SK-N-SH (cell line): ENCODE measurements at regions of chr5 and their contacts with region 1.

Region 1: DNA sequence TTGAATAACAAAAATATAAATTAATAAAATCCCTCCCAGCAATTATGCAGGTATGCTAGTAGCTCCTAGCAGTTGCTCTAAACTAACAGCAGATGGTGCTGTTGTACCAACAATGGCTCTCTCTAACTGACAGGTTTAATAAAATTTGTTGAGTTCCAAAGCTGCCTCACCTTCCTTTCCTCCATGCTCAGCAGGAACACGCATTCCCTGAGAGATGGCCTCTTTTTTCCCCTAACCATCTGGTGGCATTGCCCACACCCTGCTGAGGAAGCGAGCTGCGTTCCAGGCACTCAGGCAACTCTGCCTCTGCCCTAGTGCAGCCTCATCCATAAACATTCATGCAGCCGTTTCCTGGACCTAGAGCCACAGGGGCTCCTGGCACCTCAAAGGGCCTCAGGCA is 106.2 kb downstream of the KLHL3 start:
- DNase-seq: peak; percentile 75
- H3K4me3 ChIP-seq: peak overlapping the region in 1 of 2 experiments; percentile 45; a peak in 1 of 4 replicates
- H3K27ac ChIP-seq: no peak overlapping the region
- H3K4me1 ChIP-seq: peaks cover 0 to 3% of the 10 kb centered on the region in 2 experiments; a peak in 1 of 4 replicates
- H3K27me3 ChIP-seq: no peaks in the 10 kb centered on the region
- CTCF ChIP-seq: peak; percentile 93
- EP300 ChIP-seq: no peak
- RAD21 ChIP-seq: peak; percentile 96

Region 2: DNA sequence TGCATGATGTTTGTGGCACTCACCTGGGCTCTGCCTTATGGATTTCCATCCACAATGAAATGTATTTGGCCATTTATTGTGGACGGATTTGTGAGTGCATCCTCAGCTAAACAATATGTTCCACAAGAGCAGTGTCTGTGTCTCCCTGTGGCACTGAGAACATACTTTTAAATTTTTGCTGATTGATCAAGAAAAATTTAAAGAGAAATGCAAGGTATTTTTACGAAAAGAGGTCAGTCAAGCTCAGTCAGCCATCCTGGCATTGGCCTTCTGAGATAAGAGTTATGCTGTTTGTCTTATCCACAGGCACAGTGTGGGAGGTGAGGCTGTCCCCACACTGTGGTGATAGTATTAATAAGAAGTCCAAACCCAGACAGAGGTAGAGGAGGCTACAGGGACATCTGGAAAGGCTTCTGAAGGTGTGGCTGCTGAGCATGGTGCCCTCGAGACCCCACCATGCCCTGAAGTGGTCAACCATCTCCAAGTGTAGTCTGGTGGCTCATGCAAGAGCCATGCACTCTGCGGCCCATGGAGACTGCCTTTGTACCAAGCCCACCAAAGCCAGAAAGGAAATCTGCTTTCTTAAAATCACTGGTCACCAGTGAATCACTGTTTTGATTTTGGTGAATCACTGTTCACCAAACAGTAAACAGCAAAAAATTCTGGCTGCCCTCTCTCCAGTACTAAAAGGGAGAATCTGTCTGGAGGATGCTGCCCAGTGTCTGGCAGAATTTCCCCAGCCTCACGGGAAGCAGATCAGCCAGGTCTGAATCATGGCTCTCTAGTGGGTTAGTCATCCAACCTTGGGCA is 159.3 kb before region 1 on chr5:
- CTCF ChIA-PET with region 1: no interaction called
- POLR2A ChIA-PET with region 1: no interaction called
- DNase-seq: no peak
- H3K4me3 ChIP-seq: no peak overlapping the region
- H3K27ac ChIP-seq: peak overlapping the region in 1 of 2 experiments; percentile 97; a peak in 3 of 4 replicates
- H3K4me1 ChIP-seq: peaks cover 5 to 28% of the 10 kb centered on the region in 2 experiments
- H3K27me3 ChIP-seq: no peaks in the 10 kb centered on the region
- CTCF ChIP-seq: no peak
- EP300 ChIP-seq: peak in 1 of 2 experiments; percentile 87; a peak in 2 of 4 replicates
- RAD21 ChIP-seq: no peak

Region 3: GRCh38 chr5:137605411-137605810 is 24.2 kb before region 1 on chr5:
- CTCF ChIA-PET with region 1: interaction called, 15 read pairs
- POLR2A ChIA-PET with region 1: no interaction called
- DNase-seq: no peak
- H3K4me3 ChIP-seq: no peak overlapping the region
- H3K27ac ChIP-seq: no peak overlapping the region
- H3K4me1 ChIP-seq: peaks cover 0 to 32% of the 10 kb centered on the region in 2 experiments; a peak in 2 of 4 replicates
- H3K27me3 ChIP-seq: peaks cover 40% of the 10 kb centered on the region
- CTCF ChIP-seq: peak; percentile 27; the same call in 1 of the 2 replicates
- EP300 ChIP-seq: no peak
- RAD21 ChIP-seq: peak; percentile 56

Region 4: DNA sequence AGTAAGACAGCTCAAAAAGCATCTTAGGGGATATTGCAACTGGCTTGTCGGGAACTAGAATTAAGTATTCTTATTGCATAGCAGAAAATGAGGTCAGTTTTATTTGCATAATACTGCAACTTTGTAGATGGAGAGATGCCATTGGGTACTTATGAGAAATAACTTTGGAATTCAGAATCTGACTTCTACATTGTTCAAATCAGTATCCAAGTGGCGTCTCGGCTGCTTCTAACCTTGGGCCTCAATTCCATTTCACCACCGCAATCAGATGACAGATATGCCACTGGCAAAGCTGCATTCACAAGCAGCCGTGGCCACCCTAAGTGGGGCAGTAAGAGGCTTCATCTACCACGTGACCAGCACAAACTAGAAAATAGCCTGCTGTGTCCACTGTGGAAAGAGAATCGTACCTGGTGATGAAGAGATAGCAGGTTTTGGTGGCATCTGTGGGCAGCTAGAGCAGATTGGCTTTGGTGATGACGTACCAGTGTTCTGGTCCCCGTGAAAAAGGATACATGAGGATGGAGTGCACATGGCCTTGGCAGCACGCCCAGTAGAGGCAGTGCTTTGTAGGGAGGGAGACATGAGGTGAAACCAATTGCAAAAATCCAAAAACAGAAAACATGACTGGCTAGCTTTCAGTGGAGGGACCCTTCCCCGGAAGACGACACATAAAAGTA is 10.3 kb before region 1 on chr5:
- CTCF ChIA-PET with region 1: interaction called, 61 read pairs
- POLR2A ChIA-PET with region 1: no interaction called
- DNase-seq: peak; percentile 86
- H3K4me3 ChIP-seq: peak overlapping the region in 1 of 2 experiments; percentile 23; a peak in 1 of 4 replicates
- H3K27ac ChIP-seq: peak overlapping the region; percentile 69 to 83
- H3K4me1 ChIP-seq: peaks cover 16 to 27% of the 10 kb centered on the region in 2 experiments; a peak in 3 of 4 replicates
- H3K27me3 ChIP-seq: no peaks in the 10 kb centered on the region
- CTCF ChIP-seq: no peak
- EP300 ChIP-seq: peak in 1 of 2 experiments; percentile 81; a peak in 2 of 4 replicates
- RAD21 ChIP-seq: no peak; the same call in 1 of the 2 replicates

Region 5: GRCh38 chr5:137649228-137649935 is 19.7 kb after region 1 on chr5:
- CTCF ChIA-PET with region 1: interaction called, 143 read pairs
- POLR2A ChIA-PET with region 1: no interaction called
- DNase-seq: no peak
- H3K4me3 ChIP-seq: no peak overlapping the region
- H3K27ac ChIP-seq: no peak overlapping the region
- H3K4me1 ChIP-seq: peaks cover 0 to 8% of the 10 kb centered on the region in 2 experiments; a peak in 1 of 4 replicates
- H3K27me3 ChIP-seq: no peaks in the 10 kb centered on the region
- CTCF ChIP-seq: no peak
- EP300 ChIP-seq: no peak
- RAD21 ChIP-seq: no peak

Region 6: DNA sequence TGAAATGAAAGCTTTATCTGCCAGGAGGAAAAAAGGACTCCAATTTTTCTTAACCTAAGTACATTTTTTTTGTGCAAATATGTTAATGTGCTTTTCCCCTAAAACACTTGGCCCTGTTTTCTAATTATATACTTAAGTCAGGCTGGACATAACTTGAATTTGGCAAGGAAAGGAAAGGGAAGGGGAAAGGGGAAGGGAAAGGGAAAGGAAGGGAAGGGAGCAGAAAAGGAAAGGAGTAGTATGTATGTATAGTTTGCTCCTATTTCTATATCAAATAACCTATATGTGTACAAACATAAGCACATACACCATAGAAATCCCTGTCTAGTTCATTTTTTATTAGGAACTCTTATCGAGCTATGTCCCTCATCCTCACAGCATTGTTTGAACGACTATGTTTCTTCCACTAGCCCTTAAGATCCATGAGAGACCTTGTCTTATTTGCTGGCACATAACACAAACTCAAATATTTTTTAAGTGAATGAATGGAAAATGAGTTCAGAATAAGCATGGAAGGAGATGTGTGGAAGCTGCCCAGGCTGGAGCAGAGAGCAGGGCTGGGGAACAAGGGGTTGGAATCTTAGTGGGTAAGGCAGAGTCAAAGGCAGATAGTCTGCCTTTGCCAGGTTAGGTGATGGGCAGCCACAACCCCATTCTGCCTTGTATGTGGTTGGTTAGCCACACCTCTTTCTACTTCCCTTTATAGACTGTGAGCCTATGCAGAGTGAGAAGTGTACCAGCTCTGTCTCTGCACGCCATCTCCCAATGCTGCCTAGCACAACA is 36.2 kb after region 1 on chr5:
- CTCF ChIA-PET with region 1: interaction called, 143 read pairs
- POLR2A ChIA-PET with region 1: no interaction called
- DNase-seq: no peak
- H3K4me3 ChIP-seq: no peak overlapping the region
- H3K27ac ChIP-seq: no peak overlapping the region
- H3K4me1 ChIP-seq: no peaks in the 10 kb centered on the region; a peak in 1 of 4 replicates
- H3K27me3 ChIP-seq: no peaks in the 10 kb centered on the region
- CTCF ChIP-seq: no peak
- EP300 ChIP-seq: no peak
- RAD21 ChIP-seq: no peak

Region 7: DNA sequence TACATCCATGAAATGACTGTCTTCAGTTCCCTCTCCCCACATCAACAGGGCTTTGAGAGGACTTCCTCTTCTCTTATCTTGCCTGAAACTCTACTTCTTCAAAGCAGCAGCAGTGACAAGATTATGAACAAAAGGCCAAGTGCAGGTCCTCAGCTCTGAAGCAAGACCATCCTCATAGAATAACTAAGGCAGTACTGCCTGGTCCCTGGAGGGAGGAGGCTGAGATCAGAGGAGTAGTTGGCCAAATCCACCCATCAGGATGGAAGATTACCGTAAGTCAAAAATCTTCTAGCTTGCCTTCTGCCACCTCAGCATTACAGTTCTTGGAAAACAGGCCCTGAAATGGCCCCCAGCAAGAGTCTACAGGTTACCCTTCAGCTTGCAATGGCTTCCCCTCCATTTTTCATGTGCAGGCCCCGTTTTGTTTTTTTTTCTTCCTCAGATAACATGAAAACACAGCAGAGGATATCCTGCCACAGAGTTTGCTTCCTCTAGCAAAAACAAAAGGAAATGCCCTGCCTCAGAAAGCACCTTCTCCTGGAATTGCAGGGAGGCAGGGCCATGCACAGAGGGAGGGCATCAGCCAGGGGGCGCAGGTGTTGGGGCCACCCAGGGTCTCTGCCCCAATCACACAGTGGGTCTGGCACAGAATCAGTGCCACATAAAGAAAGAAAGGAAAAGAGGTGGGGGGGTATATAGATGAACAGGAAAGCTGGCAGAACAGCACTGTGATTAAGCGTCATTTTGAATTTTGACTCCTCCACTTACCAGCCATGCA is 66.2 kb after region 1 on chr5:
- CTCF ChIA-PET with region 1: interaction called, 10 read pairs
- POLR2A ChIA-PET with region 1: no interaction called
- DNase-seq: no peak
- H3K4me3 ChIP-seq: no peak overlapping the region
- H3K27ac ChIP-seq: no peak overlapping the region
- H3K4me1 ChIP-seq: peaks cover 0 to 10% of the 10 kb centered on the region in 2 experiments; a peak in 1 of 4 replicates
- H3K27me3 ChIP-seq: no peaks in the 10 kb centered on the region
- CTCF ChIP-seq: no peak
- EP300 ChIP-seq: no peak
- RAD21 ChIP-seq: no peak

Region 8: GRCh38 chr5:137754126-137754960 is 124.7 kb after region 1 on chr5 and contains the start of gene HNRNPA0:
- CTCF ChIA-PET with region 1: interaction called, 407 read pairs
- POLR2A ChIA-PET with region 1: interaction called, 7 read pairs
- DNase-seq: peak; percentile 97
- H3K4me3 ChIP-seq: peak within 1 kb of the TSS; percentile 93 to 94
- H3K27ac ChIP-seq: peak within 1 kb of the TSS; percentile 97
- H3K4me1 ChIP-seq: peaks cover 0 to 6% of the 10 kb centered on the region in 2 experiments; a peak in 2 of 4 replicates
- H3K27me3 ChIP-seq: no peaks in the 10 kb centered on the region
- CTCF ChIP-seq: no peak
- EP300 ChIP-seq: peak; percentile 97 to 99
- RAD21 ChIP-seq: no peak
- polyA plus RNA-seq, gene HNRNPA0: 19.2 and 24.9 TPM in 2 replicates